T-cell (primary cell): ENCODE measurements at regions of chr10 and their contacts with region 1.

Region 1: DNA sequence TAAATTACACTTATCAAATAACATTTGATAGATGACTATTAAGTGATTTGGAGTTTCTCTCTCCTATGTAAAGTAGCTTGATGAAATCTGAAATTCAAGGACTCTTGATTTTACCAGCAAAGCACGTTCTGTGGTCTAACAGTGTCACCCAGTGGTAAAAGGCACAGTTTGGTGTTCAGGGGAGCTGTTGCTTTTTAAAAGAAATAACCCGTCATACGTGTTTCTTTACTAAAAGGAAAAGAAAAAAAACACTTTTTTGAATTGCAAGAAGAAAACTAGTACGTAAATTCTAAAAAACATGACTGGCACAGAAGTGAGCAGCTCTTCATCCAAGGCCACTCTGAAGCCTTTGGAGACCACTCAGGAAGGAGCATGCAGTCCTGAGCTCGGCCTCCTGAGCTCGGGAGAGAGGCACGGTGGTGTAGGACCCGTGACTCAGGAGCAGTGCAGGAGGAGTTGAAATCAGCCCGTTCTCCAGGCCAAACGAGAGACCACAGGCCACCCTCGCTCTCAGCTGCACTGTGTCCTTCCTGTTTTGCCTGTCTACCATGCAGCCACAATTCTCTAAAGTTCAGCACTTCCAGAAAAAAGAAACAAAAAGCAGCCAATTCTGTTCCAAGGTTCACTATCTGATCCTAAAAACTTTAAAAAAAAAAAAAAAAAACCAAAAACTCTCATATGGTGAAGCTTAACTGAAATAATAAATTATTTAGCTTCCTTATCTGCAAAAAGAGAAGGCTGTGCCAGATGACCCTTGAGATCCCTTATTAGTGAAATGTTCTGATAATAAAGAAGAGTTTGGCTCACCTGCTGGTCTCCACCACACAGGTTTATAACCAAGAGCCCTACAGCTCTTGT is 212.6 kb upstream of the FRMD4A start:
- DNase-seq: peak in 30 of 35 experiments; percentile 30 to 78 (median 64)
- ATAC-seq: peak; percentile 67 to 80 (median 69)
- H3K4me3 ChIP-seq: peak overlapping the region; percentile 22 to 32
- H3K4me3 Mint-ChIP-seq: peak overlapping the region; percentile 45 to 73 (median 52)
- H3K27ac ChIP-seq: peak overlapping the region; percentile 83
- H3K27ac Mint-ChIP-seq: peak overlapping the region; percentile 75 to 89
- H3K4me1 ChIP-seq: peaks cover 22 to 60% of the 10 kb centered on the region in 2 experiments
- H3K4me1 Mint-ChIP-seq: peaks cover 89 to 95% (median 91%) of the 10 kb centered on the region in 3 donors
- H3K27me3 ChIP-seq: no peaks in the 10 kb centered on the region
- H3K27me3 Mint-ChIP-seq: no peaks in the 10 kb centered on the region

Region 2: DNA sequence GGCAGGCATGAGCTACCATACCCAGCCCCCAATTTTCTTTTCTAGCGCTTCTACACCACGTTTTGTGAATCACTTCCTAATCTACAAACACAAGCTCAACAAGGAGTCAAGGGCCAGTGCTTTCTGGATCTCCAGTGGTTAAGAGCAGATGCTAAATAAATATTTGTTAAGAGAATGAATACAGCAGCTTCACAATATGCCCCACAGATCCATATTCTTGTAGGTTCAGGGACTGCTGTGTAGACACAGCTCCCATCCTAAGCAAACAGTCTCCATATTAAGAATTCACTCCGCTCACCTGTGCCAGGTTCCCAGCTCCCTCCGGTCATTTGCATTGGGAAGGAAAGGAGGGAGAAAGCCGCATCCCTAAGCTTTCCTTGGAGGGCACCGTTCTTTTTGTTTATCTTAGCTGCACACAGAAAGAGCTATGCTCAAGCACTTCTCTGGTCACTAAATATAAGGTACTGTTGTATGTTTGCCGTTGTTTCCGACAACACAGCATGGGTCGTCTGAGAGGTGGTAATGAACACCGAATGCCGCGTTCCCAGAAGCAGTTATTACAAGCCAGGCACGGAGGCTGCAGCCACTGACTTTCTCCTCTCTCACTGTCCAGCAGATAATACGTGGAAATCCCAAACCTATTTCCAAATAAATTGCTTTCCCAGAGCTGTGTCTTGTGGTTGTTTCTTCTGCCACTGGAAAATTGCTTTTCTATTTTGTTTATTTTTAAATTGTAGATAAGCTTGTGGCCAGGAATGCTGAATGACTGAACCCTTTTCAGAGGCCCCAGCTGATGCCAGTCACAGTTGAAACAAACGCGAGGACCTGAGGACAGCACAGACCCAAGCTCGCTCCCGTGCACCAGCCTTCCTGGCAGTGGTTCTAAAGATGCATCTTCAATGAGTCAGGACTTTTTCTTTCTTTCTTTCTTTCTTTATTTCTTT is 739.4 kb before region 1 on chr10:
- CTCF ChIA-PET with region 1: no interaction called
- POLR2A ChIA-PET with region 1: no interaction called
- DNase-seq: no peak
- ATAC-seq: no peak
- H3K4me3 ChIP-seq: no peak overlapping the region
- H3K4me3 Mint-ChIP-seq: no peak overlapping the region
- H3K27ac ChIP-seq: no peak overlapping the region
- H3K27ac Mint-ChIP-seq: no peak overlapping the region
- H3K4me1 ChIP-seq: peaks cover 5 to 14% of the 10 kb centered on the region in 2 experiments
- H3K4me1 Mint-ChIP-seq: peaks cover 13 to 20% (median 17%) of the 10 kb centered on the region in 3 donors
- H3K27me3 ChIP-seq: peaks cover 0 to 4% of the 10 kb centered on the region in 2 experiments
- H3K27me3 Mint-ChIP-seq: peaks cover 0 to 2% of the 10 kb centered on the region in 2 donors

Region 3: DNA sequence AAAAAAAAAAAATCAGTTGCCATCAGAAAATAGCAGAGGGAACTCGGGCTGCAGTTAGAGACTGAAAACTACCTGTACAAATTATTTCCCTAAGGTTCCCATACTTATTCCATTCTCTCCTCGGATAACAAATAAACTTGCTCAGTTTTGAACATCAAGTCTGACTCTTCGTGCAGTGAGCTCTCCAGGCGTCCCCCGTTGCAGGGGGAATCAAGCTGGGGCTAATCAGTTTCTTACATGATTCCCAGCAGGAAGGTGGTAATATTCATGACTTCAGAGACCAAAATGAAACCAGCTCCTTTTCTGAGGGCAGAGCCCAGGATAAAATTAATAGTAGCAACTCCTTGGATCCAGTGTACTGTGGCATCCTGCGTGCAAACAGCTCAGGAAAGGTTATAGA is 347.8 kb before region 1 on chr10:
- CTCF ChIA-PET with region 1: interaction called, 5 to 19 read pairs
- POLR2A ChIA-PET with region 1: no interaction called
- DNase-seq: no peak
- ATAC-seq: no peak
- H3K4me3 ChIP-seq: no peak overlapping the region
- H3K4me3 Mint-ChIP-seq: no peak overlapping the region
- H3K27ac ChIP-seq: no peak overlapping the region
- H3K27ac Mint-ChIP-seq: no peak overlapping the region
- H3K4me1 ChIP-seq: no peaks in the 10 kb centered on the region
- H3K4me1 Mint-ChIP-seq: no peaks in the 10 kb centered on the region
- H3K27me3 ChIP-seq: peaks cover 0 to 17% of the 10 kb centered on the region in 2 experiments
- H3K27me3 Mint-ChIP-seq: peaks cover 32 to 38% of the 10 kb centered on the region in 2 donors

Region 4: GRCh38 chr10:14459665-14460064 is 83.6 kb before region 1 on chr10:
- CTCF ChIA-PET with region 1: no interaction called
- POLR2A ChIA-PET with region 1: no interaction called
- DNase-seq: no peak
- ATAC-seq: no peak
- H3K4me3 ChIP-seq: no peak overlapping the region
- H3K4me3 Mint-ChIP-seq: no peak overlapping the region
- H3K27ac ChIP-seq: no peak overlapping the region
- H3K27ac Mint-ChIP-seq: no peak overlapping the region
- H3K4me1 ChIP-seq: no peaks in the 10 kb centered on the region
- H3K4me1 Mint-ChIP-seq: no peaks in the 10 kb centered on the region
- H3K27me3 ChIP-seq: peaks cover 0 to 6% of the 10 kb centered on the region in 2 experiments
- H3K27me3 Mint-ChIP-seq: peaks cover 13 to 15% of the 10 kb centered on the region in 2 donors

Region 5: GRCh38 chr10:14498326-14498725 is 44.9 kb before region 1 on chr10:
- CTCF ChIA-PET with region 1: interaction called, 5 to 10 read pairs
- POLR2A ChIA-PET with region 1: no interaction called
- DNase-seq: no peak
- ATAC-seq: no peak
- H3K4me3 ChIP-seq: no peak overlapping the region
- H3K4me3 Mint-ChIP-seq: no peak overlapping the region
- H3K27ac ChIP-seq: no peak overlapping the region
- H3K27ac Mint-ChIP-seq: no peak overlapping the region
- H3K4me1 ChIP-seq: peaks cover 0 to 7% of the 10 kb centered on the region in 2 experiments
- H3K4me1 Mint-ChIP-seq: peaks cover 8 to 13% (median 8%) of the 10 kb centered on the region in 3 donors
- H3K27me3 ChIP-seq: no peaks in the 10 kb centered on the region
- H3K27me3 Mint-ChIP-seq: no peaks in the 10 kb centered on the region

Region 6: DNA sequence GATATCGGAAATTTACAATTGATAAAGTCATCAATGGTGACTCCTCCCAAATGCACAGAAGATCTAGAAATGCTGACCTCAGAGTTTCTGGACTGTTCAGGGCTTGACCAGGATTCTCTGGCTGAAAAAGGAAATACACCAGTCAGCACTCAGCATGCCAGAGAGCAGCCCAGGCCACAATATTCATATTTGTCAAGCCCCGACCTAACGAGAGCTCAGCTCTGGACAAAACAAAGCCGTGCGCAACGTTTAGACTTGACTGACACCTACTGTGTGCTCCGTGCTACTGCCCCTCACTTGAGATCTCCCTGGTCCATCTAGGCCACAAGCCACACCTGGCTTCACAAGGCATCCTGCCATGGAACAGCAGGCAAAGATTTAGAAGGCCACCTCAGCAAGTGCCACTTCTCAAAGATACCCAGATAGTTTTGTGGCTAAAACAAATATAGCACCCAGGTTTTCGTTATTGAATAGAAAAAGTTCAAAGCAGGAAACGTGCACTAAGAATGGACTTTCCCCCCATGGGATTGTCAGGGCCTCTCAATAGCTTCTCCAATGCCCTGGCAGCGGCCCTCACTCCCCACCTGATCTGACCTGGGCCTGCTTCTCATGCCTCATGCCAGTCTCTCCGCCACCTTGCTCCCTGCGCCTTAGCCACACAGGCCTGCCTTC is 13.1 kb after region 1 on chr10:
- CTCF ChIA-PET with region 1: interaction called, 8 to 26 read pairs
- POLR2A ChIA-PET with region 1: interaction called, 3 to 7 read pairs
- DNase-seq: peak in 13 of 35 experiments; percentile 24 to 65 (median 36)
- ATAC-seq: peak in 3 of 4 experiments; percentile 8 to 29 (median 20)
- H3K4me3 ChIP-seq: no peak overlapping the region
- H3K4me3 Mint-ChIP-seq: peak overlapping the region; percentile 50 to 85 (median 61)
- H3K27ac ChIP-seq: peak overlapping the region; percentile 76
- H3K27ac Mint-ChIP-seq: peak overlapping the region; percentile 94 to 95
- H3K4me1 ChIP-seq: peaks cover 66 to 87% of the 10 kb centered on the region in 2 experiments
- H3K4me1 Mint-ChIP-seq: peaks cover 96 to 97% (median 97%) of the 10 kb centered on the region in 3 donors
- H3K27me3 ChIP-seq: no peaks in the 10 kb centered on the region
- H3K27me3 Mint-ChIP-seq: no peaks in the 10 kb centered on the region

Region 7: DNA sequence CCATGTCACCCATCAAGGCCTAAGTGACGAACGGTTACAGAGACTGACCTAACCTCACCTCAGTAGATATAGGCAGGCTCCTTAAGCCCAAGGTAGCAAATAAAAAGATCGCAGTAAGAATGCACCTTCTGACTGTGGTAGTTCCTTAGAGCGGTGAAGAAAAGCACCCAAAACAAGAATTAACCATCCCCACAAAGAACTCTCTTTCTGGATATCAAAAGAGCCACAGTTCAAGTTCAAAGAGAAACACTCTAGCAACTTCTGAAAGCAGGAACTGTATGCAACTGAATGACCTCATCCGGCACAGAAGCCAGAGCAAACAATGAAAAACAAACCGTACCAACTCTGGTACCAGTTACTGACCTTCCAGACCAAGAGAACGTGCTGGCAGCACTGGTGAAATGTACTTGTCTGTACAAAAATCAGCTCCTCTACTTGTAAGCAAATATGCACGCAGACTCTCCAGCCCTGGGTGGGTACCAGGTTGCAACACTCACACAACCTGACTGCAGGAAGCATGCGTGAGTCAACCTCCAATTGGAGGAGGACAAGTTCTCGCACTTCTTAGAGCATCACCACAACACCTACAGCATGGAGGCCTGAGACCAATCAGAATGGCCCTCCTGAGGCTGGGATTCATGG is 28.7 kb after region 1 on chr10:
- CTCF ChIA-PET with region 1: interaction called, 11 to 12 read pairs
- POLR2A ChIA-PET with region 1: interaction called, 7 read pairs
- DNase-seq: peak; percentile 45 to 91 (median 68)
- ATAC-seq: peak; percentile 75 to 82 (median 78)
- H3K4me3 ChIP-seq: peak overlapping the region; percentile 57 to 86
- H3K4me3 Mint-ChIP-seq: peak overlapping the region; percentile 85 to 91 (median 90)
- H3K27ac ChIP-seq: peak overlapping the region; percentile 95
- H3K27ac Mint-ChIP-seq: peak overlapping the region; percentile 99 to 100
- H3K4me1 ChIP-seq: peaks cover 48 to 63% of the 10 kb centered on the region in 2 experiments
- H3K4me1 Mint-ChIP-seq: peaks cover 82 to 93% (median 93%) of the 10 kb centered on the region in 3 donors
- H3K27me3 ChIP-seq: no peaks in the 10 kb centered on the region
- H3K27me3 Mint-ChIP-seq: no peaks in the 10 kb centered on the region

Region 8: GRCh38 chr10:14822879-14823755 is 279.8 kb after region 1 on chr10:
- CTCF ChIA-PET with region 1: interaction called, 5 to 17 read pairs
- POLR2A ChIA-PET with region 1: no interaction called
- DNase-seq: peak in 30 of 35 experiments; percentile 5 to 63 (median 31)
- ATAC-seq: peak in 3 of 4 experiments; percentile 36 to 70 (median 61)
- H3K4me3 ChIP-seq: no peak overlapping the region
- H3K4me3 Mint-ChIP-seq: no peak overlapping the region
- H3K27ac ChIP-seq: no peak overlapping the region
- H3K27ac Mint-ChIP-seq: peak overlapping the region in 1 of 2 donors; percentile 76
- H3K4me1 ChIP-seq: no peaks in the 10 kb centered on the region
- H3K4me1 Mint-ChIP-seq: peaks cover 0 to 26% (median 5%) of the 10 kb centered on the region in 3 donors
- H3K27me3 ChIP-seq: no peaks in the 10 kb centered on the region
- H3K27me3 Mint-ChIP-seq: no peaks in the 10 kb centered on the region